Upper lobe of right lung (tissue), 1 donor: ENCODE measurements at regions of chr1 and their contacts with region 1.

Region 1: GRCh38 chr1:27097484-27097917 is 57.4 kb downstream of the SLC9A1 start:
- DNase-seq: peak; percentile 87
- ATAC-seq: peak; percentile 84
- H3K4me3 ChIP-seq: no peak overlapping the region
- H3K27ac ChIP-seq: peak overlapping the region; percentile 76
- H3K4me1 ChIP-seq: peaks cover 27% of the 10 kb centered on the region
- H3K27me3 ChIP-seq: no peaks in the 10 kb centered on the region
- CTCF ChIP-seq: peak; percentile 98

Region 2: DNA sequence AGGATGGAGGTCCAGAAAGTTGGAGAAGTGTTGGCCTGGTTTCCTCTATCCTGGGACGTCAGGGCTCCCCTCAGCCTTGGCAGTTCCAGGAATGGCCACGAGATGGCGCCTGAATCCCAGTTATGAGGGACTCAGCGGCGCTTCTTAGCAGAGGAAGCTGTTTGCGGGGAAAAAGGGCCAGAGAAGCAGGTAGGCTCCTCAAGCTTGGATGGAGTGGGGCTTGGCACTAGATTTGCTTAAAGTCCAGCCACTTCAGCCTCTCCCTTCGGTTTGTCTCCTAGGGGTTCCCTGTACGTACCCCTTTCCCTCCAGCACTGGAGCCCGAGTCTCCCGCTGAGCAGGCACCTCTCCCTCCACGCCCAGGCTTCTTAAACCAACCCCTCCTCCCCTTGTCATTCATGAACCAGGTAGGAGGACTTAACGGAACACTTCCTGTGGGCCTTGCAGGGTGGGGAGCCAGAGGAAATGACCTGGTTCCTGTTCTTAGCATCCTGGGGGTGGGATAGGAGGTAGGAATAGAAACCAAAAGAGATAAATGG is 52.8 kb before region 1 on chr1:
- intact Hi-C with region 1: loop called (anchors 5 kb)
- DNase-seq: peak; percentile 92
- ATAC-seq: peak; percentile 96
- H3K4me3 ChIP-seq: peak overlapping the region; percentile 0
- H3K27ac ChIP-seq: no peak overlapping the region
- H3K4me1 ChIP-seq: peaks cover 12% of the 10 kb centered on the region
- H3K27me3 ChIP-seq: no peaks in the 10 kb centered on the region
- CTCF ChIP-seq: peak; percentile 99